Adrenal gland (tissue), 19 donors: ENCODE measurements at regions of chr16 and their contacts with region 1.

Region 1: GRCh38 chr16:19907161-19907992 is 22.7 kb upstream of the GPRC5B start:
- DNase-seq: peak; percentile 30 to 81 (median 61)
- H3K4me3 ChIP-seq: no peak overlapping the region
- H3K27ac ChIP-seq: no peak overlapping the region
- H3K4me1 ChIP-seq: no peaks in the 10 kb centered on the region
- H3K27me3 ChIP-seq: peaks cover 4% of the 10 kb centered on the region
- CTCF ChIP-seq: peak; percentile 83 to 96 (median 93)
- POLR2A ChIP-seq: no peak

Region 2: DNA sequence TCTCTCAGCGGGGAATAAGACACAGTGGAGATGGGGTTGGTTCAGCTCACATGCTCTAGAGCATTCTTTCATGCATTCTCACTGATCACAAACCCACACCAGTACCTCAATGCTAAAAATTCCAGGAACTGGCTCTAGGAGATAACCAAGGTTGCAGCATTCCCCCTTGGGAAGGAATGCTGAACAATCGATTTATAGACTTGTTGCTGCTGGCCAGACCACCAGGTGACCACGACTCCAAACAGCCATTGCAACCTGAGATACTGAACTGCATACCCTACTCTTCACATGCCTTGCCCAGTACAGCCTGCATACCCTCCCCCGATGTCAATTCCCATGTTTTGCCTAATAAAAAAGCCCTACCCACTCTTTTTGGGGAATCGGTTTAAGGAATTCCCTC is 52.4 kb after region 1 on chr16:
- intact Hi-C with region 1: no loop called
- DNase-seq: no peak
- H3K4me3 ChIP-seq: no peak overlapping the region
- H3K27ac ChIP-seq: no peak overlapping the region
- H3K4me1 ChIP-seq: no peaks in the 10 kb centered on the region
- H3K27me3 ChIP-seq: peaks cover under 1% of the 10 kb centered on the region
- CTCF ChIP-seq: no peak
- POLR2A ChIP-seq: no peak

Region 3: DNA sequence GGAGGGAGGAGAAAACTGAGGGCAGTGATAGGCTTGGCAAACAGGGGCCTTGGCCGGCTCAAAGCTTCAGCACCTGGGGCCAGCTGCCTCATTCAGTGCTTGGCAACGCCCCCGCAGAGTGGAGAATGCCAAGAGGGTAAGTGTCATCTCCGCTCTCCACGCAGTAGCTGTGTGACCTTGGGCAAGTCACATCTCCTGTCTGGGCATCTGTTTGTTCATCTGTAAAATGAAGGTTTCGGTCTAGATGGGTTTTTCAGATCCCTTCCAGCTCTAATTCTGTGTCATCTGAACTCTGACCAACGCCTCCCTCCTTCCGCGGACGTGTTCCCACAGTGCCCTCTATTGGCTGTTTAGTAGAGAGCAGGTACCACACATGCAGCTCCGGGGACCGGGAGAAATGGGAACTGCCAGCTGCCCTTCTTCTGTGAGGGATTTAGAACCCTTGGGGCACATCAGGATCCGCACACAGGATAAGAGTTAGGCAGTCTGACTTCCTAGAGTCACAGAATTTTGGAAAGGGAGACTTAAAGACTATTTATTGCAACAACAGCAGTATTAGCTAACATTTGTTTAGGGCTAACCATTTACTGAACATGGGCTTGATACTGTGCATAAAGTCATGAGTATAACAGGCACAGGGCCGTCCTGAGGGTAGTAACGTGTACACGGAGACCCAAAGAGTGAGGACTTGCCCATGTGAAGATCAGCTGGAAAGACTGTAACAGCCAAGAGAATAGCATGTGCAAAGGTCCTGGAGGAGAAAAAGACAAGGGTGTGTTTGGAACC is 393.1 kb after region 1 on chr16:
- intact Hi-C with region 1: loop called (anchors 5 to 10 kb)
- DNase-seq: peak; percentile 43 to 68 (median 62)
- H3K4me3 ChIP-seq: no peak overlapping the region
- H3K27ac ChIP-seq: no peak overlapping the region
- H3K4me1 ChIP-seq: no peaks in the 10 kb centered on the region
- H3K27me3 ChIP-seq: no peaks in the 10 kb centered on the region
- CTCF ChIP-seq: peak; percentile 45 to 72 (median 64)
- POLR2A ChIP-seq: no peak

Region 4: DNA sequence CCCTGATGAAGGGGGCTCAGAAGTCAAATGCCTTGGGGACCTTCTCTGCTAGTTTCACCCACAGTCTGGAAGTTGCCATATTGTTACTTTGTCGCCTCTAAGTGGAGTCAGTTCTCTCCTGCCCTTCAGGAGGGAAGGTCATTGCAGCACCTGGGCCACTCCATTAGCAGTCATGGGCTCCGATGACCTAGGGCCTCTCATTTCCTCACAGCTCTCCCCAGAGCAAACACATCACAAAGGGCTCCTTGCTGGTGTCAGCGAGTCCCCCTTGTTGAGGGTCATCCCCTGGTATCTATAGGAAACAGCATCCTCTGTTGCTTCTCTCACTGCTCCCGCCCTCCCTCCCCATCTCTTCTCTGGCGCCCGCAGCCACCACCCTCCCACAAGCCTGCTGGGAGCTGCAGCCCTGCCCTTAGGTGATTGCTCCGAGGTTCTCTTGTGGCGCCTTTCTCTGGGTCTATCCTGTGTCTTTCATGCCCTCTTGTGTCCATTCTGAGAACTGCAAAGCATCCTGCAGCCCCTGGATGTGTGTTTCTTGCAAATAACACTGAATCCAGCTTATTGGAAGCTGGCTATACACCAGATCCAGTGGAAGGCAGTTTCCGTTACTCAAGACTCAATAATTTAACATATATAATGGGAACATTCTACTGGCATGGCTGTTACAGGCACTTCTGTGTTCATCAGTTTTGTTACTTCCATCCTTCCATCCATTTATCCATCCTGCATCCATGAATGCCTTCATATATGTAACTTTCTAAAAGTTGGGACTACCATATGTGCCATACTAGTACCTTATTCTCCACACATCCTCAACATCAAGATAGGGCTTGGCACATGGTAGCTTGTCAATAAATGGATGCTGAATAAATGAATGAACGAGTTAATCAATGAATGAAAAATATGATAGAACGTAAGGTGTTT is 476.0 kb after region 1 on chr16:
- intact Hi-C with region 1: loop called (anchors 5 kb)
- DNase-seq: peak; percentile 49 to 84 (median 60)
- H3K4me3 ChIP-seq: no peak overlapping the region
- H3K27ac ChIP-seq: no peak overlapping the region
- H3K4me1 ChIP-seq: peaks cover 0 to 5% of the 10 kb centered on the region in 2 donors
- H3K27me3 ChIP-seq: no peaks in the 10 kb centered on the region
- CTCF ChIP-seq: peak; percentile 68 to 78 (median 75)
- POLR2A ChIP-seq: no peak